Heart right ventricle (tissue), 16 donors: ENCODE measurements at regions of chr20 and their contacts with region 1.

Region 1: GRCh38 chr20:40683221-40683893 is 5.7 kb downstream of the MAFB start:
- DNase-seq: peak in 1 of 2 donors; percentile 45
- ATAC-seq: peak; percentile 16 to 42 (median 34)
- H3K4me3 ChIP-seq: peak overlapping the region; percentile 3 to 68 (median 54)
- H3K27ac ChIP-seq: peak overlapping the region; percentile 39 to 77 (median 70)
- H3K4me1 ChIP-seq: peaks cover 3 to 57% (median 35%) of the 10 kb centered on the region in 9 donors
- H3K27me3 ChIP-seq: peaks cover 0 to 71% (median 33%) of the 10 kb centered on the region in 7 donors
- CTCF ChIP-seq: no peak

Region 2: DNA sequence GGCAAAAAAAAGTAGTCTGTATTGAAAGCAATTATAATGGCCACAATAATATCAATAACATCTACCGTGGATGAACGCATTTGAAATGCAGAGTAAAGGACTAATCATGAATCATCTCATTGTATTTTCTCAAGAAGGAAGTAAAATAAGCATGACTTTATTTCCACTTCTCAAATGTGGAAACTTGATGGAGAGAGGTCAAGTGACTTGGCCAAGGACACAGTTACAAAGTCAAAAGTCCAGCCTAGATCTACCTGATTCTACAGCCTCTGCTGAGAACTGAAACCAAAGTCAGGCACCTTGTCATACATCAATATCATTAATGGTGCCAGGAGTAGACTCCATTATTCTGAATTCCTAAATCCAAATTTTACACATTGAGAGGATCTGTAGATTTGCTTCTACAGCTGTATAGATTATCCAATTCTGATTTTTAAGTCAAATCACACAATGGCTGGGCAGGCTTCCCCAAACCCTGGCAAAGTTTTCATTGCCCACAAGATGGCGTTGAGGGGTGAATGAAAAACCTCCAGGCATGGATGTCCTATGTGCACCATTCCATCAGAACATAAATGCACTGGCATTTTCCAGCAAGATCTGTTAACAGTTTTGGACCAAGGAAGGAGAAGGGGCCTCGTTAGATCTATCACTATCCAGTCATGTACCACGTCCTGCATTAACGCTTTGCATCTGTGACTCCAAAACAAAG is 417.4 kb before region 1 on chr20:
- intact Hi-C with region 1: loop called in 3 of 10 experiments (anchors 2 to 10 kb)
- DNase-seq: peak in 1 of 2 donors; percentile 15
- ATAC-seq: peak in 7 of 8 donors; percentile 29 to 64 (median 51)
- H3K4me3 ChIP-seq: no peak overlapping the region
- H3K27ac ChIP-seq: no peak overlapping the region
- H3K4me1 ChIP-seq: peaks cover 0 to 10% (median 0%) of the 10 kb centered on the region in 9 donors
- H3K27me3 ChIP-seq: no peaks in the 10 kb centered on the region
- CTCF ChIP-seq: peak in 8 of 9 donors; percentile 16 to 62 (median 46)

Region 3: GRCh38 chr20:40718982-40719729 is 35.8 kb after region 1 on chr20:
- intact Hi-C with region 1: no loop called
- DNase-seq: no peak
- ATAC-seq: peak in 1 of 8 donors; percentile 34
- H3K4me3 ChIP-seq: no peak overlapping the region
- H3K27ac ChIP-seq: no peak overlapping the region
- H3K4me1 ChIP-seq: peaks cover 0 to 3% (median 0%) of the 10 kb centered on the region in 9 donors
- H3K27me3 ChIP-seq: peaks cover 0 to 5% (median 0%) of the 10 kb centered on the region in 7 donors
- CTCF ChIP-seq: no peak

Region 4: DNA sequence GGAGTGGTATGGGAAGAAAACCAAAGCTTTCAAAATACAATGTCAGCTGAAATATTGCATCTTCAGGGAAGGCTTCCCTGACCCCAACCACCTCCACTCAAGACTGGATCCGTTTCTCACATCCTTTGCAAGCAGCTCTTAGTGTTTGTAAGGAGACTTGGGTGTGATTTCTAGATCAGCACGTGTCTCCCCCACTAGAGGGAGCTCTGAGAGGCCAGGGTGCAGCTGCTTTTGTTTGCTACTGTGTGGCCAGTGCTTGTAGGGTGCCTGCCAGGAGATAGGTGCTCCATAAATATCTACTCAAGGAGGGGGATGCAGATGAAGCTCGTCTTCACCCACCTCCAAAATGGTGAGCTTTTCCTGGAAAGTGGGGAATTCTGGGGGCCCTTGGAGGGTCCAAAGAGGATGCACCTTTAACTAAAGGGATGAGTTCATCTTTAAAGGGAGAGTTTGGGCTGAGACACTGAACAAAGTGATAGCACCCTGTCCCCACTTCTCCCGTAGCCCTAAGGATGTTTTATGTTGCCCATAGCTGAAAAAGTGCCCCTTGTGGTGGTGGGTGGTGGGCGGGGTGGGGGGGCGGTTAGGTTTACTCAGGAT is 58.2 kb after region 1 on chr20:
- intact Hi-C with region 1: no loop called
- DNase-seq: peak; percentile 27
- ATAC-seq: peak in 2 of 8 donors; percentile 61 to 70
- H3K4me3 ChIP-seq: no peak overlapping the region
- H3K27ac ChIP-seq: no peak overlapping the region
- H3K4me1 ChIP-seq: no peaks in the 10 kb centered on the region
- H3K27me3 ChIP-seq: peaks cover 0 to 15% (median 7%) of the 10 kb centered on the region in 7 donors
- CTCF ChIP-seq: peak in 8 of 9 donors; percentile 18 to 73 (median 63)

Region 5: GRCh38 chr20:40962730-40963504 is 279.6 kb after region 1 on chr20:
- intact Hi-C with region 1: no loop called
- DNase-seq: peak; percentile 62 to 65
- ATAC-seq: peak; percentile 77 to 89 (median 84)
- H3K4me3 ChIP-seq: no peak overlapping the region
- H3K27ac ChIP-seq: no peak overlapping the region
- H3K4me1 ChIP-seq: peaks cover 0 to 15% (median 0%) of the 10 kb centered on the region in 9 donors
- H3K27me3 ChIP-seq: peaks cover 0 to 4% (median 0%) of the 10 kb centered on the region in 7 donors
- CTCF ChIP-seq: peak; percentile 82 to 96 (median 92)